GM12878 (cell line): ENCODE measurements at regions of chr2 and their contacts with region 1.

Region 1: GRCh38 chr2:234500394-234501006 is 3.6 kb upstream of the ARL4C start:
- DNase-seq: peak; percentile 53
- ATAC-seq: peak; percentile 90
- H3K4me3 ChIP-seq: no peak overlapping the region
- H3K27ac ChIP-seq: no peak overlapping the region
- H3K4me1 ChIP-seq: peaks cover 3% of the 10 kb centered on the region
- H3K27me3 ChIP-seq: peaks cover 3 to 7% of the 10 kb centered on the region in 2 experiments
- CTCF ChIP-seq: peak; percentile 50 to 74 (median 66)
- EP300 ChIP-seq: no peak
- POLR2A ChIP-seq: no peak
- RAD21 ChIP-seq: peak; percentile 77

Region 2: DNA sequence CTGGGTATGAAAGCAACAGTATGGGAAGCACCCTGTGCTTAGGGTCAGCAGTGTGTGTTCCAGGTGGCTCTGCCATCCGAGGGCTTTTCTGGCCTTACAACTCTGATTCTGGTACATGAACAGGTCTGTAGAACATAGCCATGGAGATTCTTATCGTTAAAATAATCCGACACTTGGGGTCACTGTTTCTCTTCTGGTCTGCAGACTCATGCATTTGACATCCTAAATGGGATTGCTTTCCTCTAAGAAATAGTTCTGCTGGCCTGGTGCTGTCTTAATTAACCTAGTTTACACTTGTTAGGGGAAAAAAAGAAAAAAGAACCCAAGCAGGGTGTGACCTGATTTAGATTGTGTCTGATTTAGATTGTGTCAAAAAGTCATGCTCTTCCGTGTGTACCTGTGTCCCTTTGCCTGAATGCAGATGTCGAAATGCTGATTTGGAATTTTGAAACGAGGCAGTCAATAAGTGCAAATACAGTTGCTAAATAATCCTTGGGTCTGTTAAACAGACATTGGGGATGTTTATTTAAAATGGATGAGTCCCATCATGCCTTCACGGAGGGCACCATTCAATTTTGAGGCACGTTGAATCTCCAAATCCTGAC is 523.7 kb before region 1 on chr2:
- CTCF ChIA-PET with region 1: interaction called, 3 read pairs
- POLR2A ChIA-PET with region 1: no interaction called
- RAD21 ChIA-PET with region 1: interaction called, 3 read pairs
- SMC1A ChIA-PET with region 1: no interaction called
- in situ Hi-C with region 1: no loop called
- intact Hi-C with region 1: loop called (anchors 1 kb)
- DNase-seq: peak; percentile 9
- ATAC-seq: peak; percentile 79
- H3K4me3 ChIP-seq: no peak overlapping the region
- H3K27ac ChIP-seq: no peak overlapping the region
- H3K4me1 ChIP-seq: no peaks in the 10 kb centered on the region
- H3K27me3 ChIP-seq: no peaks in the 10 kb centered on the region; a peak in 1 of 4 replicates
- CTCF ChIP-seq: peak; percentile 37 to 58 (median 37); a peak in 5 of 6 replicates
- EP300 ChIP-seq: no peak
- POLR2A ChIP-seq: no peak
- RAD21 ChIP-seq: peak; percentile 58

Region 3: GRCh38 chr2:234135720-234136221 is 364.7 kb before region 1 on chr2:
- CTCF ChIA-PET with region 1: interaction called, 12 read pairs
- POLR2A ChIA-PET with region 1: no interaction called
- RAD21 ChIA-PET with region 1: interaction called, 9 read pairs
- SMC1A ChIA-PET with region 1: interaction called, 4 read pairs
- in situ Hi-C with region 1: loop called (anchors 5 kb)
- intact Hi-C with region 1: loop called (anchors 1 kb)
- DNase-seq: peak; percentile 5
- ATAC-seq: peak; percentile 88
- H3K4me3 ChIP-seq: no peak overlapping the region
- H3K27ac ChIP-seq: no peak overlapping the region
- H3K4me1 ChIP-seq: no peaks in the 10 kb centered on the region
- H3K27me3 ChIP-seq: no peaks in the 10 kb centered on the region; a peak in 3 of 4 replicates
- CTCF ChIP-seq: peak; percentile 62 to 79 (median 68)
- EP300 ChIP-seq: no peak
- POLR2A ChIP-seq: no peak
- RAD21 ChIP-seq: peak; percentile 70

Region 4: DNA sequence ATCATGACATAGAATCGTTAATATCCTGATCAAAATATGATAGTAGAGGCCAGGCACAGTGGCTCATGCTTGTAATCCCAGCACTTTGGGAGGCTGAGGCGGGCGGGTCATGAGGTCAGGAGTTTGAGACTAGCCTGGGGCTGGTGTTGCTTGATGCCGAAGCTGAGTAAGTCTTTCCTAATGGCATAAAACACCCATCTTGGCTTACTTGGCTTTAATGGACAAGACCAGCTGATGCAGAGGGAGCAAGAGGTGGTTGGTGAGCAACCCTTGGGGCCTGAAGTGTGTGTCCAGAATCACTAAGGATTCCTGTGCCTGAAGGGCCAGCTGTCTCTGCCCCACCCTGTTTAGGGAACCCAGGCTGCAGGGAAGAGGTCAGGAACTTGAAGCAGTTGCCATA is 220.9 kb before region 1 on chr2:
- CTCF ChIA-PET with region 1: no interaction called
- POLR2A ChIA-PET with region 1: no interaction called
- RAD21 ChIA-PET with region 1: no interaction called
- SMC1A ChIA-PET with region 1: no interaction called
- in situ Hi-C with region 1: loop called (anchors 5 kb)
- intact Hi-C with region 1: no loop called
- DNase-seq: no peak
- ATAC-seq: no peak
- H3K4me3 ChIP-seq: no peak overlapping the region
- H3K27ac ChIP-seq: no peak overlapping the region
- H3K4me1 ChIP-seq: no peaks in the 10 kb centered on the region
- H3K27me3 ChIP-seq: no peaks in the 10 kb centered on the region
- CTCF ChIP-seq: no peak
- EP300 ChIP-seq: no peak
- POLR2A ChIP-seq: no peak
- RAD21 ChIP-seq: no peak